ENCODE measurements at regions of chr2 and their contacts with region 1.

Region 1: GRCh38 chr2:23662941-23663920 is 263.7 kb downstream of the ATAD2B start:
- DNase-seq: peak; percentile 83
- H3K4me3 ChIP-seq: peak overlapping the region; percentile 6 to 42 (median 38)
- H3K27ac ChIP-seq: peak overlapping the region; percentile 3 to 61 (median 38)
- H3K4me1 ChIP-seq: peaks cover 0 to 20% (median 17%) of the 10 kb centered on the region in 4 donors
- H3K27me3 ChIP-seq: no peaks in the 10 kb centered on the region
- CTCF ChIP-seq: no peak
- EP300 ChIP-seq: no peak
- POLR2A ChIP-seq: no peak

Region 2: DNA sequence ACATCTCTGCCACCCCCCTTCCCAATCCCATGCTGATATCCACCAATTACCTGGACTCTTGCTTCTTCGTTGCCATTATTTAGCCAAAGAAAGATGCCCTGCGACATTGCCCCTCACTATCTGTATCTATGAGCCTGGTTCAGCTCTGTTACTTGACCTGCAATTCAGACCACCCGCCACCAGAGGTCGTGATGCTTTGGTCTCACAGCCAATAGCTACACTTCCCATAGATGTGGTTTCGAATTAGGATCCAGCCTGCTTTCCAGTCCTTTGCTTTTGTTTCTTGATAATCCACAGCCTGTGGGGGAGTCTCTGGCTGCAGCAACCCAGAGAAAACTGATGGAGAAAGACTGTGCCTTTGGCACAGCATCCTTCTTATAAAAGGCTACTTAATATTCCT is 38.9 kb before region 1 on chr2:
- intact Hi-C with region 1: loop called (anchors 5 kb)
- DNase-seq: peak; percentile 30
- H3K4me3 ChIP-seq: no peak overlapping the region
- H3K27ac ChIP-seq: no peak overlapping the region
- H3K4me1 ChIP-seq: peaks cover 0 to 61% (median 37%) of the 10 kb centered on the region in 4 donors
- H3K27me3 ChIP-seq: no peaks in the 10 kb centered on the region
- CTCF ChIP-seq: peak in 1 of 4 experiments; percentile 30
- EP300 ChIP-seq: no peak
- POLR2A ChIP-seq: no peak